Astrocyte of the cerebellum (primary cell): ENCODE measurements at regions of chr6 and their contacts with region 1.

Region 1: DNA sequence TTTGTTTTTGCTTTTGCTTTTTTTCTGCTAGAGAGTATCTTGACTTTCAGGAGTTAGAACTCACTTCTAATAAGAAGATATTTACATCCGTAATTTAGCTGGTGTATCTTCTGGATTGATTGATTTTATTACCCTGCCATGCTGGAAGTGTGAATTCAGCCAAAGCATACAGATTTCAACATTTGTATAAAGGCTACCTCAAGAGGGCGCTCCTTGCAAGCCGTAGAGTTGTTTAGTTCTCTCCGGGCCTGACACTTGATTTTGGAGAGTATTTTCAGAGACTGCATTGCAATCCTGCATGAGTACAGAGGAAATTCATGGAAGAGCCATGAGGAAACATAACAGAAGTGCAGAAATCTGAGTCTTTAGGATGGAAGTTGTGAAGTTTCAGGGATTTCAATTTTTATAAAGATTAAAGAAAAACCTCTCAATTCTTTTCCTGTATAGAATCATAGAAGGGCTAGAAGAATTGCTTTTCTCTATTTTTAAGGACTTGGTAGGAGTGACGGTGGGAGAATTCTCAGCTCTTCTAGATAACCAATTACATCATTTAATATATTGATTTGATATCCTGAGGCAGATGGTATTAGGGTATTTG is 66.7 kb upstream of the TIAM2 start:
- DNase-seq: peak; percentile 66
- H3K4me3 ChIP-seq: no peak overlapping the region
- CTCF ChIP-seq: peak; percentile 70

Region 2: DNA sequence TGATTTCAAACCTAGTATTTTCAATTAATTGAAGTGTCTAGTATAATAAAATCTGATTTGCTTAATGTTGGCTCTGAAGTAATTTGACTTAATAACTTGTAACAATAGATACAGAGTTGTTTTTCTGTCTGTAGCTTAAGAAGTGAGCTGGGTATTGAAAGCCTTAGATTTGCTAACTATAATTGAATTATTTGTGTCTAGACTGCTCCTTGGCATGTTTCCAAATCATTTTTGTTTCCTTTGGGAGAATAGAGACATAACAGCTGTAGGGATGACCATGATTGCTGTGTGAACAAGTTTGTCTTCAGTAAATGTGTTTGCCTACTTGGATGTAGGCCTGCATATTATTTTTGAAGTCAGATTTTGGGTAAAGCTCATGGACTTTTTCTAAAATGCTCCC is 79.8 kb before region 1 on chr6:
- in situ Hi-C with region 1: no loop called
- DNase-seq: no peak
- H3K4me3 ChIP-seq: no peak overlapping the region
- CTCF ChIP-seq: no peak

Region 3: DNA sequence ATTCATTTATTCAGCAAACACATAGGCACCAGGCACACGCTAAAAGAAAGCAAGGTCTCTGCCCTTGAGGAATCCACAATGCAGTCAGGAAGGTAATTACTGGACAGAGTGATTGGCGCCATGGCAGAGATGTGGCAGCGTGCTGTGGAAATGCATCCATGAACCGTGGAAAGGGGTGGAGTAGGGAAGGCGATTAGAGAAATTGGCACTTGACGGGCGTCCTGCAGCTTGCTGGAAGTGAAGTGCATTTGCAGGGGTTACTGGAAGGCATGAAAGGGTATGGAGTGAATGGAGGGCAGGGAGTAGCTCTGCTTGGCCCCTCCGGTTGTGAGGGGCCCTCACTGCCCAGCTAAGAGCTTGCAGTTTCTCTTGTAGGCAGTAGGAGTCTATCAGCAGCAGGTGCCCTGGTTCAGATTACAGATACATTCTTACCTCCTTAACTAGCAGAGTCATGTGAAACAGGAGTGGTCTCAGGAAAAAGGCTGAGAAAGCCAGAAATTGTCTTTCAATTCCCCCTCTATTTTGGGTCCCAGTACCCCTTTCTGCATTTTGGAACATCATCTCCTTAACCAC is 55.8 kb before region 1 on chr6:
- in situ Hi-C with region 1: loop called (anchors 5 kb)
- DNase-seq: no peak
- H3K4me3 ChIP-seq: no peak overlapping the region
- CTCF ChIP-seq: peak; percentile 20

Region 4: DNA sequence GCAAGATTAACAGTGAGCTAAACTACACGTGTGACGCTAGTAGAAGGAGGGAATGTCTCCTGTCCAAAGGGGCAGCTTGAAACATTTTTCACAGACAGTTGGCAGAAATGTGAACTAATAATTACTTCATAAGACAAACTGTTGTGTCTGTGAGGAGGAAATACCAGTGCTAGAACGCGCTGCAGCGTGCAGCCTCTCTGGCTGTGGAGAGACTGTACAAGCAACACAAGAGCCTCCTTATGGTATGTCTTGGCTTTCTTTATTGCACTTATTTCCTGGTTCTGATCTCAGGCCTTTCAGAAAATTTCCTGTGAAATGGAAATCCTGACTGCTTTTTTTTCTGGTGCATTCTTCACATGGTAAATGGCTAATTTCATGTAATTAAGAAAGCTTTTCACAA is 41.4 kb after region 1 on chr6:
- in situ Hi-C with region 1: no loop called
- DNase-seq: no peak
- H3K4me3 ChIP-seq: no peak overlapping the region
- CTCF ChIP-seq: no peak

Region 5: GRCh38 chr6:155174576-155175211 is 246.3 kb after region 1 on chr6:
- in situ Hi-C with region 1: loop called (anchors 5 kb)
- DNase-seq: peak; percentile 80
- H3K4me3 ChIP-seq: no peak overlapping the region
- CTCF ChIP-seq: peak; percentile 75

Region 6: DNA sequence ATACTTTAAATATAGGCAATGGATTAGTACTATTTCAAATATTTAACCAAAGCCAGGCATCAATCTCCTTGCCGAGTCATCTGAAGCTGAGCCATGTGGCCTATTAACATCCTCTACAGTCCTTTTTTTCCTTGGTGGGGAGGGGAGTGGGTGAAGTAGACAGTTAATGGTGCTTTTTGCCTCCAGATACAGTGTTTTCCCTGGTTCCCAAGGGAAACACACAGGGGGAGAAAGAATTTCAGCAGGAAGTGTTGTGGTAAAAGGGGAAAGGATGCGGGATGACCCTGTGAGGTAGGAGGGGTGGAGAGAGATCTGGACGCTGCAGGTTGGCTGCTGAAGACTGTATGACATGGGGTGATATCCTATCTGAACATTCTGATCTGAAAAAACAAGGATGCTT is 345.0 kb after region 1 on chr6:
- in situ Hi-C with region 1: loop called (anchors 25 kb)
- DNase-seq: peak; percentile 96
- H3K4me3 ChIP-seq: no peak overlapping the region
- CTCF ChIP-seq: no peak